ENCODE measurements at regions of chr15 and their contacts with region 1.

Region 1: GRCh38 chr15:47397655-47398054 is 319.6 kb upstream of the SEMA6D start:
- DNase-seq: no peak
- ATAC-seq: no peak
- H3K4me3 ChIP-seq: no peak overlapping the region
- H3K27ac ChIP-seq: peak overlapping the region in 2 of 12 donors; percentile 13 to 19
- H3K4me1 ChIP-seq: peaks cover 0 to 23% (median 10%) of the 10 kb centered on the region in 12 donors
- H3K27me3 ChIP-seq: no peaks in the 10 kb centered on the region
- CTCF ChIP-seq: no peak
- POLR2A ChIP-seq: no peak

Region 2: DNA sequence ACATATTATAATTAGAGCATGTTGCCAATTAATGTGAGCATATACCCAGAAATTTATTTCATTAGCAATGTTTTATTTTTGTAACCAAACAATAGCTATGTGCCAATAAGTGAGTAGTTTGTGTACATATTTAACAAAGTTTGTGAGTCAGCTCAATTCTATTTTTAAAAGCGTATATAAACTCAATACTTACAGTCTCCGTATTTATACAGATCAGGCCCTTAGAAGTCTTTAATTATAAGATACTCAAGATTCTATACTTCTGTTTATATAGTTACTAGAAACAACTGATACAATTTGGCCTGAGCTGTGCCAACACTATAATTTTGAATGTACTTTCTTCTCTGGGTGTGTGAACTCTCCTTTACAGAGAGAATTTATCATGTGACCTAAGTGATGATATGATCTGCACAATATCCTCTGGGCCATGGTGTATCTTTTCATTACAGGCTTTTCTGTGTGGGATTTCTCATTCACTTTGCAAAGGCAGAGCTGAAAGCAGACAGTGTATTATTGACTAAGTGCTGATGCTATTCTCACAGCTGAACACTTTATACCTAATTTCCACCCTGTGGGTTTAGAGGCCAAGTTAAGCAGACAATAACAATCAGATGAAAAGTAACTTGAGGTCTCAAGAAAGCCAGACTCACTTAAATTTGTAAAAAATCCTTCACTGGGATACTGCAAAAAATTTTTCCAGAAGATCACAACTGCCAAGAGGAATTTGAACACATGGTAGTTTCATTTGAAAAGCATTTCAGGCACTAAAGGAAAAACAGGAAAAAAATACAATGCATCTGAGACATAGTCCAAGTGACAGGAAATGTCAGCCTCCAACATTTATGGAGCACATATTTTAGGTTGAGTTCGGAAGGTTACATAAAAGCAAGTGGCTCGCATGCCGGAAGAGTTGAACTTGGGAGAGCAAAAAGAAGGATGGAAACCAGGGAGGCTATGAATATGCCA is 41.8 kb after region 1 on chr15:
- intact Hi-C with region 1: loop called in 1 of 10 experiments (anchors 5 kb)
- DNase-seq: no peak
- ATAC-seq: peak in 1 of 4 donors; percentile 36
- H3K4me3 ChIP-seq: no peak overlapping the region
- H3K27ac ChIP-seq: peak overlapping the region in 7 of 12 donors; percentile 1 to 41 (median 10)
- H3K4me1 ChIP-seq: peaks cover 0 to 16% (median 5%) of the 10 kb centered on the region in 12 donors
- H3K27me3 ChIP-seq: no peaks in the 10 kb centered on the region
- CTCF ChIP-seq: no peak
- POLR2A ChIP-seq: no peak

Measured in heart left ventricle (tissue), 16 donors.